ENCODE measurements at regions of chr2 and their contacts with region 1.

Region 1: GRCh38 chr2:190319555-190320498 is at the start of gene HIBCH:
- DNase-seq: peak; percentile 99
- H3K4me3 Mint-ChIP-seq: peak within 1 kb of the TSS; percentile 87
- H3K27ac Mint-ChIP-seq: peak within 1 kb of the TSS; percentile 78
- H3K4me1 Mint-ChIP-seq: peaks cover 35% of the 10 kb centered on the region
- H3K27me3 Mint-ChIP-seq: no peaks in the 10 kb centered on the region
- CTCF ChIP-seq: peak; percentile 56
- total RNA-seq, gene HIBCH: 14.7 and 16.2 TPM in 2 replicates

Region 2: DNA sequence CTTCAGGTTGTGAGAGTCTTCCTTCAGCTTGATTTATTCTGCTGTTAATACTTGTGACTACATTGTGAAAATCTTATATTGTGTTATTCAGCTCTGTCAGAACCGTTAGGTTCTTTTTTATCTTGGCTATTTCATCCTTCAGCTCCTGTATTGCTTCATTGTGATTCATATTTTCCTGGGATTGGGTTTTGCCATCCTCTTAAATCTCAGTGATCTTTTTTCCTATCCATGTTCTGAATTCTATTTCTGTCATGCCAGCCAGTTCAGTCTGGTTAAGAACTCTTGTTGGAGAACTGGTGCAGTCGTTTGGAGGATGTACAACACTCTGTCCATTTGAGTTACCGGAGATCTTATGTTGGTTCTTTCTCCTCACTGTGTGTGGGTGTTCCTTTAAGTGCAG is 276.4 kb before region 1 on chr2:
- CTCF ChIA-PET with region 1: no interaction called
- POLR2A ChIA-PET with region 1: no interaction called
- intact Hi-C with region 1: no loop called
- DNase-seq: peak; percentile 11
- H3K4me3 Mint-ChIP-seq: no peak overlapping the region
- H3K27ac Mint-ChIP-seq: no peak overlapping the region
- H3K4me1 Mint-ChIP-seq: peaks cover 11% of the 10 kb centered on the region
- H3K27me3 Mint-ChIP-seq: no peaks in the 10 kb centered on the region
- CTCF ChIP-seq: no peak

Region 3: GRCh38 chr2:190352668-190353536 is 33.1 kb after region 1 on chr2:
- CTCF ChIA-PET with region 1: no interaction called
- POLR2A ChIA-PET with region 1: interaction called, 20 read pairs
- intact Hi-C with region 1: no loop called
- DNase-seq: no peak
- H3K4me3 Mint-ChIP-seq: no peak overlapping the region
- H3K27ac Mint-ChIP-seq: no peak overlapping the region
- H3K4me1 Mint-ChIP-seq: peaks cover 14% of the 10 kb centered on the region
- H3K27me3 Mint-ChIP-seq: no peaks in the 10 kb centered on the region
- CTCF ChIP-seq: no peak

Measured in MCF 10A (cell line).